ENCODE measurements at regions of chr12 and their contacts with region 1.

Region 1: GRCh38 chr12:95700316-95700785 is 90.2 kb downstream of the NTN4 start:
- DNase-seq: no peak

Region 2: GRCh38 chr12:95653761-95654546 is 46.4 kb before region 1 on chr12:
- intact Hi-C with region 1: loop called in 1 of 2 experiments (anchors 1 kb)
- DNase-seq: no peak

Region 3: GRCh38 chr12:95717974-95718431 is 17.7 kb after region 1 on chr12:
- intact Hi-C with region 1: loop called in 1 of 2 experiments (anchors 1 kb)
- DNase-seq: no peak

Measured in posterior vena cava (tissue), 2 donors.